ENCODE measurements at regions of chr21 and their contacts with region 1.

Region 1: GRCh38 chr21:31343680-31344480 is at the start of gene TIAM1:
- DNase-seq: peak; percentile 89
- H3K4me3 ChIP-seq: peak within 1 kb of the TSS; percentile 75 to 81 (median 77)
- H3K27ac ChIP-seq: peak within 1 kb of the TSS; percentile 58
- H3K4me1 ChIP-seq: peaks cover 10% of the 10 kb centered on the region
- H3K27me3 ChIP-seq: no peaks in the 10 kb centered on the region
- CTCF ChIP-seq: no peak
- total RNA-seq, gene TIAM1: 14.7 to 27.7 TPM

Region 2: GRCh38 chr21:31218830-31219608 is 124.9 kb before region 1 on chr21:
- CTCF ChIA-PET with region 1: no interaction called
- dilution Hi-C with region 1: no loop called
- in situ Hi-C with region 1: no loop called
- intact Hi-C with region 1: loop called (anchors 5 kb)
- DNase-seq: peak; percentile 92
- H3K4me3 ChIP-seq: no peak overlapping the region
- H3K27ac ChIP-seq: peak overlapping the region; percentile 64
- H3K4me1 ChIP-seq: peaks cover 34% of the 10 kb centered on the region
- H3K27me3 ChIP-seq: no peaks in the 10 kb centered on the region
- CTCF ChIP-seq: no peak

Region 3: DNA sequence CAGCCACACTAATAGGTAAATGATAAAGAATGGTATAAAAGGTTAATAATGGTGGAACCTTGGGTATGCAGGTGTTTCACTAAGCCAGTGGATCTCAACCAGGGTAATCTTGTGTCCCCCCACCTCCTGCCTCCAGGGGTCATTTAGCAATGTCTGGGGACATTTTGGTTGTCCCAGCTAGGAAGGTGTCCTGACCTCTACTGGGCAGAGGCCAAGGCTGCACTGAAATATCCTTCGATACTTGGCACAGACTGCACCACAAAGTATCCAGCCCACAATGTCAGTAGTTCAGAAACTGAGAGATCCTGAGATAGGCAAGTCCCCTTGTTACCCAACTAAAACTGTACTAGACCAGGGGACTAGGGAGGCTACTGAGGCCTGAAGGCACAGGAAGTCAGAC is 113.8 kb after region 1 on chr21:
- CTCF ChIA-PET with region 1: no interaction called
- dilution Hi-C with region 1: no loop called
- in situ Hi-C with region 1: no loop called
- intact Hi-C with region 1: loop called (anchors 1 kb)
- DNase-seq: no peak
- H3K4me3 ChIP-seq: no peak overlapping the region
- H3K27ac ChIP-seq: no peak overlapping the region
- H3K4me1 ChIP-seq: no peaks in the 10 kb centered on the region
- H3K27me3 ChIP-seq: no peaks in the 10 kb centered on the region
- CTCF ChIP-seq: peak in 1 of 2 donors; percentile 29

Measured in mammary epithelial cell (primary cell).